Breast epithelium (tissue), 4 donors: ENCODE measurements at regions of chr2 and their contacts with region 1.

Region 1: GRCh38 chr2:12317814-12318426 is 398.8 kb upstream of the TRIB2 start:
- DNase-seq: no peak
- H3K4me3 ChIP-seq: no peak overlapping the region
- H3K27ac ChIP-seq: peak overlapping the region; percentile 63 to 87
- H3K4me1 ChIP-seq: no peaks in the 10 kb centered on the region
- H3K27me3 ChIP-seq: no peaks in the 10 kb centered on the region
- CTCF ChIP-seq: no peak
- POLR2A ChIP-seq: no peak

Region 2: GRCh38 chr2:12296915-12297314 is 21.0 kb before region 1 on chr2:
- intact Hi-C with region 1: loop called (anchors 2 kb)
- DNase-seq: no peak
- H3K4me3 ChIP-seq: no peak overlapping the region
- H3K27ac ChIP-seq: no peak overlapping the region
- H3K4me1 ChIP-seq: no peaks in the 10 kb centered on the region
- H3K27me3 ChIP-seq: no peaks in the 10 kb centered on the region
- CTCF ChIP-seq: no peak
- POLR2A ChIP-seq: no peak